ENCODE measurements at regions of chr7 and their contacts with region 1.

Region 1: DNA sequence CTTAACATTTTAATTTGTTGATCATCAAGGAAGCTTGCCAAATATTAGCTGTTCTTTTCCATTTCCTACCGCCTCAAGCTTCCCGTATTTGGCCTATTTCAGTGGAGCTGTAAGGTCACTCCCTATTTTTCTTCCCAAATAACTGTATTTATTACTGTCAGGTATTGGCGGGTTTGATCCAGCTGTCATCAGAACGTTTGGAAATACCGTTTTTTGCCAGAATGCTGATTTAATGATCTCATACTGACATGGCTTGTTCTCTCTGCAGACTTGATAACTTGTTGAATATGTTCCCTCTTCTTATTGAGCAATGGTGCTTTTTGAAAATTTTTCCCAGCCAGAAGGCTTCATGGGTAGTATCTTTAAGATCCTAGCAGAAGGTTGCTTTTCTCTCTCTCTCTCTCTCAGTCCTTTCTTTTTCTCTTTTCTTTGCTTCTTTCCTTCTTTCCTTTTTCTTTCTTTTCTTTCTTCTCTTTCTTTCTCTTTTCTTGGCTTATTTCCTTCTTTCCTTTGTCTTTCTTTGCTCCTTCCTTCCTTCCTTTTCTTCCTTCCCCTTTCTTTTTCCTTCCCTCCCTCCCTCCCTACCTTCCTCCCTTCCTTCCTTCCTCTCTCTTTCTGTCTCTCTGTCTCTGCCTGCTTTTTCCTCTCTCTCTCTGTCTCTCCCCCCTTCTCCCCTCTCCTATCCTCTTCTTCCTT is 42.1 kb downstream of the CUX1 start:
- DNase-seq: no peak
- ATAC-seq: peak; percentile 46

Region 2: DNA sequence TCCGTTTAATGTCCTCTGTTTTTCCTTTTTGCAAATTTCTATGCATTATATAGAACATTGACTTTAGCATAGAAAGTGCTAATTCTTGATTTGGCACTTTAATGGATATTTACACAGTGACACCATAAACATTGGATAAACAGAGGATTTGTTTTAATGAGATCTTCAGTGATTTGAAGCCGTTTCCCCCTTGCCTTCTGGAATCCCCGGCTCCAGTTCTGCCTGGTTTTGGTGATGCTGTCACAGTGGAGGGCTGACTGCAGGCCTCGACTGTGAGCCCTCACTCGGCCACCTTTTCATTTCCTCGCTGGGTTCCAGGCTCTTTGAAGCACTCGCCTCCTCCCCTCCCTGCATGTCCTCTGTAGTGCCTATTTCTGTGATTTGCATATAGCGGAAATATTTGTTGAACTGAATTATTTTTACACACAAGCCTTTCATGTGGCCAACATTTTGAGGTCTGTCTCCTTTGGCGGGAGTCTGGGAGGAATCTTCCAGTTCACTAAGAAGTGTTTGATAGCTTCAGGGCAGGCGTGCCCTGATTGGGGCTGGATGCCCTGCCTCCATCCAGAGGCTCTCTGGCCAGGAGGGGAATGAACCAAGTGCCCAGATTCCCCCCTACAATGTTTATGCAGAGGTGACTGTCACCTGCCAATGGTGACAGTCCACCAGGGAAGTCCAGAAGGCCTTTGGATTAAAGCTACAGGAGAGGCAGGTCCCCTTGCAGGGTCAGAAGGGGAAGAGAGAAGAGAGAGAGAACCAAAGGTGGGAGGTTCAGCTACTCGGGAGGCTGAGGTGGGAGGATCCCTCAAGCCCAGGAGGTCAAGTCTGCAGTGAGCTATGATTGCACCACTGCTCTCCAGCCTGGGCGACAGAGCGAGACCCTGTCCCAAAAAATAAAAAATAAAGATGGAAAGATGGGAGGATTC is 25.4 kb after region 1 on chr7:
- intact Hi-C with region 1: loop called (anchors 2 kb)
- DNase-seq: no peak
- ATAC-seq: no peak

Measured in sciatic nerve (tissue), 2 donors.